Activated B cell treated with CpG ODN at 0.5 μM for 24 hours (primary cell): ENCODE measurements at regions of chr6 and their contacts with region 1.

Region 1: DNA sequence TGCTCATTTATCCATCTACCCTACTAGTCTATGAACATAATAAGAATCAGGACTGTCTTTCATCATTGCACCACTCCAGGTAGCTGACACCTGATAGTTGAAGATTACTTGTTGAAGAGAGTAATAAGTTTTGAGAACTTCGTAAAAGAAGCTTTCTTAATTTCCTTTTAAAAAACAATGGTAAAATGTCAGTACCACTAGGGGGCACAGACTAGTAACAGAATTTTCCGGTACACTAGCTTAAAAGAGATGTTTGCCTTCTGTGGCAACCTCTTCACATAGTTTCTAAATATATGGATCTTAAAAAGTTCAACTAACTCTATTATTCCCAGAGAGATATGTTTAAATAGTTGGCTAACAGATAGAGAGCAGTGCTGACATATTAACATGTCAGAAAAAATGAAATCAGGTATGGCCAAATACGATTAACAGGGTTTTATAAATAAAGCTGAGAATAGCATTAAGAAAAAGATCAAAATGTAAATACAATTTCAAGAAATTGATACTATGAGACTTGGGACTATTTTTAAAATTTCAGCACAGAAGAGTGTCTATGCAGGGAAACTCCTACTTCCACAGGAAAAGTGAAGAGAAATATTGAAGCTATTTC is 5.4 kb upstream of the KCNQ5 start:
- DNase-seq: no peak
- ATAC-seq: no peak
- H3K4me3 Mint-ChIP-seq: no peak overlapping the region
- H3K27ac Mint-ChIP-seq: no peak overlapping the region
- H3K4me1 Mint-ChIP-seq: peaks cover 28% of the 10 kb centered on the region
- H3K27me3 Mint-ChIP-seq: no peaks in the 10 kb centered on the region
- CTCF ChIP-seq: no peak

Region 2: GRCh38 chr6:72411872-72412708 is 204.4 kb before region 1 on chr6:
- CTCF ChIA-PET with region 1: interaction called, 33 read pairs
- POLR2A ChIA-PET with region 1: no interaction called
- intact Hi-C with region 1: loop called (anchors 1 kb)
- DNase-seq: peak; percentile 67
- ATAC-seq: peak; percentile 99
- H3K4me3 Mint-ChIP-seq: no peak overlapping the region
- H3K27ac Mint-ChIP-seq: no peak overlapping the region
- H3K4me1 Mint-ChIP-seq: peaks cover 5% of the 10 kb centered on the region
- H3K27me3 Mint-ChIP-seq: peaks cover 20% of the 10 kb centered on the region
- CTCF ChIP-seq: peak; percentile 100

Region 3: DNA sequence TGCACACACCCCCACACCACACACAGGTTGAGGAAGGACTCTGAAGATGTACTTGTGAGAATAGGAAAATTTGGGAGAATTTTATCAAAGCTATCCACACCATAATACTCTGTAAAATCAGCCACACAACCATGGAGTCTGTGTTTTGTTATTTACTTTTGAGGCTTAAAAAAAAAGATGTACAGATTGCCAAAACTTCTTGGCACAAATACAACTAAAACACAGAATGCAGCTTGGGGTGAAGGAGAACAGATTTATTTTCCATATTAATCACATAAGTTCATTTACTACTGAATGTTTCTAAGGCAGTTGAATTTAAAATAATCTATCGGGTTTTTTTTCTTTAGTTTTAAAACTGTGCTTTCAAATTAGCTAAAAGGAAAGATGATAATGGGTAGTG is 27.4 kb before region 1 on chr6:
- CTCF ChIA-PET with region 1: no interaction called
- POLR2A ChIA-PET with region 1: interaction called, 11 read pairs
- intact Hi-C with region 1: no loop called
- DNase-seq: no peak
- ATAC-seq: no peak
- H3K4me3 Mint-ChIP-seq: no peak overlapping the region
- H3K27ac Mint-ChIP-seq: no peak overlapping the region
- H3K4me1 Mint-ChIP-seq: no peaks in the 10 kb centered on the region
- H3K27me3 Mint-ChIP-seq: peaks cover 7% of the 10 kb centered on the region
- CTCF ChIP-seq: no peak

Region 4: GRCh38 chr6:72643214-72643613 is 26.7 kb after region 1 on chr6:
- CTCF ChIA-PET with region 1: interaction called, 13 read pairs
- POLR2A ChIA-PET with region 1: interaction called, 39 read pairs
- intact Hi-C with region 1: no loop called
- DNase-seq: no peak
- ATAC-seq: no peak
- H3K4me3 Mint-ChIP-seq: no peak overlapping the region
- H3K27ac Mint-ChIP-seq: no peak overlapping the region
- H3K4me1 Mint-ChIP-seq: peaks cover 29% of the 10 kb centered on the region
- H3K27me3 Mint-ChIP-seq: no peaks in the 10 kb centered on the region
- CTCF ChIP-seq: no peak

Region 5: DNA sequence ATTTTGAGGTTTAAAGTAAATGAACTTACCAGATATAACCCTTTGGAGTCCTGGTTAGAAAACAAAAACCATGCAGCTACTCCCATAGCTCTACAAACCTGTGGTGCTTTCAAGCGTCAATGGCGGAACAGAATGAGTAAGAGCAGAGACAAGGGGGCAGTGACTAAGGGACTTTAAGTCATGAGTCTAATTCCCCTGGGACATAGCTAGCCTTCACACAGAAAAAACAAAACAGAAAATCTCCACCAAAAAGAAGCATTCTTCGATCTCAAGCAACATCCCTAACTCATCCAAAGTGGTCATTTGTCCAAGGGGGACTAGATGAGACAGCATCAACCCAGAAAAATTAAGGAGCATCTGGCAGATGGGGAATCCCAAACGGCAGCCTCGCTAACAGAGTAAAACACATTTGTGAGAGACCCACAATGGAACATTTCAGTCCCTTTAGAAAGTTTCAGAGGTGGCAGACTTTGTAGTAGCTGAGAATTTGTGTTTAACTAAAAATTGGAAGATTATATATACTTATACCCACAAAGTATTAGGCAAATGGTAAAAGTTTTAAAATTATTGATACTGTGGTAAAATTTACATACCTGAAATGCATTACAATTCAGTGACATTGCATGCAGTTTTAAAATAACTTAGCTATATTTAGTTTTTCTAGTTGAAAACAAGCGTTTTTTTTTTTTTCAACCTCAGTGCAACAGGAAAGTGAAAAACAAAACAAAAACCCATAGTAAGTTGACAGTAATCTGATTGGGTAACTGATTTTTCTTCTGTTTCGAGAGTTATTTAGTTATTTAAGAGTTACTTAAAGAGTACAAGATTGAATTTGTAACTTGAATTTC is 72.8 kb after region 1 on chr6:
- CTCF ChIA-PET with region 1: interaction called, 12 read pairs
- POLR2A ChIA-PET with region 1: interaction called, 13 read pairs
- intact Hi-C with region 1: no loop called
- DNase-seq: no peak
- ATAC-seq: peak; percentile 100
- H3K4me3 Mint-ChIP-seq: peak overlapping the region; percentile 76
- H3K27ac Mint-ChIP-seq: peak overlapping the region; percentile 82
- H3K4me1 Mint-ChIP-seq: peaks cover 13% of the 10 kb centered on the region
- H3K27me3 Mint-ChIP-seq: no peaks in the 10 kb centered on the region
- CTCF ChIP-seq: no peak

Region 6: DNA sequence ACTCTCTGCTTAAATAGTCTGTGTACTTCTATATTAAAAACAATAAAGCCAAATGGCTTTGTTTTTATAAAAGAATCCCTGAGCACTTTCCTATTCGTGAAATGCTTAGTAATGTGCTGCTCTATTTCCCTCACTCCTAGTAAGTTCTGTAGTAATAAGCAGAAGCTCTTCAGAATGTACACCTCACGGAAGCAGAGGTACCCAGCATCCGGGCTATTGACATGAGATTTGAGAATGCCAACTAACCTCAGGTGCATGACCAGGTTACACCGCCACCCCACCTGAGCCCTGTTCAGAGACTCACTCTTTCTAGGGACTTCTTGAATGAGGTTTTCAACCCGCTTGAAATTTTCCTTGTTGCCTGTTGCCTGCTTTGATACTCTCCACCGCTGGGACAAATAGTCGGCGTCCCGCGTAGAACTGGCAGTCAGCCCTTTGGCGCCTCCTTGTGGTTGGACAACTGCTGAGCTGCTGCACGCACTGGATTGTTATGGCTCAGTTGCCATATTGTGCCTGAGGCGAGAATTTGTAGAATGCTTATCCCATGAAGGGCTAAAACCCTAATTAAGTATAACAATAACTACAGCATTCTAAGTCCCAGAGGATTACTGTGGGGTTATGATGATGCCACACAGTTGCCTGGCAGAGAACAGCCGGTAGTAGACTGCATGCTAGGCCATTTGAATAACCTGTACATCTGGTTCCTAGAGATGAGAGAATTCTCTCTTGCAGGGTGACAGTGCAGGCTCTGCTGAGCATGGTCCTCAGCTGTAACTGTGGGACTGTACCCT is 513.3 kb after region 1 on chr6:
- CTCF ChIA-PET with region 1: interaction called, 423 read pairs
- POLR2A ChIA-PET with region 1: interaction called, 20 read pairs
- intact Hi-C with region 1: loop called (anchors 1 kb)
- DNase-seq: peak; percentile 72
- ATAC-seq: peak; percentile 90
- H3K4me3 Mint-ChIP-seq: peak overlapping the region; percentile 33
- H3K27ac Mint-ChIP-seq: no peak overlapping the region
- H3K4me1 Mint-ChIP-seq: peaks cover 4% of the 10 kb centered on the region
- H3K27me3 Mint-ChIP-seq: no peaks in the 10 kb centered on the region
- CTCF ChIP-seq: peak; percentile 8